Esophagus squamous epithelium (tissue), 5 donors: ENCODE measurements at regions of chr7 and their contacts with region 1.

Region 1: GRCh38 chr7:134605973-134606923 is 40.4 kb upstream of the BPGM start:
- DNase-seq: no peak
- H3K4me3 ChIP-seq: peak overlapping the region in 1 of 4 donors; percentile 28
- H3K27ac ChIP-seq: peak overlapping the region in 3 of 4 donors; percentile 5 to 17 (median 7)
- H3K4me1 ChIP-seq: peaks cover 4 to 32% (median 5%) of the 10 kb centered on the region in 3 donors
- H3K27me3 ChIP-seq: no peaks in the 10 kb centered on the region
- CTCF ChIP-seq: peak; percentile 68 to 95 (median 92)
- POLR2A ChIP-seq: no peak

Region 2: GRCh38 chr7:134051020-134051419 is 555.2 kb before region 1 on chr7:
- intact Hi-C with region 1: no loop called
- DNase-seq: no peak
- H3K4me3 ChIP-seq: no peak overlapping the region
- H3K27ac ChIP-seq: no peak overlapping the region
- H3K4me1 ChIP-seq: no peaks in the 10 kb centered on the region
- H3K27me3 ChIP-seq: no peaks in the 10 kb centered on the region
- CTCF ChIP-seq: no peak
- POLR2A ChIP-seq: no peak

Region 3: DNA sequence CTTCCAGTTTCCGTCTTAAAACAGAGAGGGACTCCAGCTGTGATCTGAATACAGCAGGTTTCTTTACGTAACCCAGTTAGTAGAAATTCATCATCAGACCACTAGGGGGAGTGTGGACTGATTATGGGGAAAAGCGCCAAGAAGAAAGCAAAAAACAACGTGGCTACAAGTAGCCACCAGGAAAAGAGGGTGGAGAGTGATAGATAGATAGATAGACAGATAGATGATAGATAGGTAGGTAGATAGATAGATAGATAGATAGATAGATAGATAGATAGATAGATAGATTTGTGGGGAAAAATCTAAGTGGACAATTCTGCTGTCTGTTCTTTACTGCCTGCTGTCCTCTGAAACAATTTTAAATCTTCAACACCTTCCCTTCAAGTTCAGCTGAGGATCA is 91.6 kb before region 1 on chr7:
- intact Hi-C with region 1: loop called (anchors 5 kb)
- DNase-seq: no peak
- H3K4me3 ChIP-seq: no peak overlapping the region
- H3K27ac ChIP-seq: peak overlapping the region in 2 of 4 donors; percentile 38 to 53
- H3K4me1 ChIP-seq: peaks cover 6 to 27% (median 11%) of the 10 kb centered on the region in 3 donors
- H3K27me3 ChIP-seq: peaks cover 0 to 5% (median 0%) of the 10 kb centered on the region in 4 donors
- CTCF ChIP-seq: peak; percentile 68 to 89 (median 82)
- POLR2A ChIP-seq: no peak

Region 4: DNA sequence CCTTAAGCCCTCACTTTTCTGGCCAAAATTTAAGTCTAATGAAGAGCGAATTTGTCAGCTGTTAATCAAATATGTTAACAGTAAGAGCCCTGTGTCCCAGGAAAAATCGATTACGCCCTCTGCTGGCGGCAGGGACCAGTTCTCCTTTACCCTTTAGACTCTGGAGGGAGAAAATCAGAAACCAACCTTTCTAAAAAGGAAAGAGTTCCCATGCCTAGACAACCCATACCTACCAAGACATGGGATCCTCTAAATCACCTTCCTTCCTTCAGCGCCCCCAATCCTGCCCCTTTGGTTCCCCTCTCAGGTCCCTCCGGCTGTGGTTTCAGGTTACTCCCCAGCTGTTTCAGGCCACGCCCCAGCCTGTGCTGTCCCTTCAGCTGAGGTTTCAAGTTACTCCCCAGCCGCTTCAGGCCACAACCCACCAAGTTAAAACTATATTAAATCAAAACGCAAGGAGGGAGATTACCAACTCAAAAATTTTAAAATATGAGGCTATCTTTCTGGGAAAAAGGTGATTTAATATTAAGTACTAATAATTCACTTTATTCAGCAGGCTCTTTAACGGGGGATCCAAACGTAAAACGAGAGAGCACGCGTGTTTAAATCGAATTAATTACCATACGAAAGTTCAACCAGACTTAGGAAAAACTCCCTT is 58.7 kb before region 1 on chr7:
- intact Hi-C with region 1: no loop called
- DNase-seq: no peak
- H3K4me3 ChIP-seq: peak overlapping the region; percentile 18 to 59 (median 36)
- H3K27ac ChIP-seq: peak overlapping the region; percentile 71 to 87 (median 78)
- H3K4me1 ChIP-seq: peaks cover 6 to 19% (median 9%) of the 10 kb centered on the region in 3 donors
- H3K27me3 ChIP-seq: no peaks in the 10 kb centered on the region
- CTCF ChIP-seq: peak; percentile 71 to 90 (median 83)
- POLR2A ChIP-seq: no peak